ENCODE measurements at regions of chrX and their contacts with region 1.

Region 1: DNA sequence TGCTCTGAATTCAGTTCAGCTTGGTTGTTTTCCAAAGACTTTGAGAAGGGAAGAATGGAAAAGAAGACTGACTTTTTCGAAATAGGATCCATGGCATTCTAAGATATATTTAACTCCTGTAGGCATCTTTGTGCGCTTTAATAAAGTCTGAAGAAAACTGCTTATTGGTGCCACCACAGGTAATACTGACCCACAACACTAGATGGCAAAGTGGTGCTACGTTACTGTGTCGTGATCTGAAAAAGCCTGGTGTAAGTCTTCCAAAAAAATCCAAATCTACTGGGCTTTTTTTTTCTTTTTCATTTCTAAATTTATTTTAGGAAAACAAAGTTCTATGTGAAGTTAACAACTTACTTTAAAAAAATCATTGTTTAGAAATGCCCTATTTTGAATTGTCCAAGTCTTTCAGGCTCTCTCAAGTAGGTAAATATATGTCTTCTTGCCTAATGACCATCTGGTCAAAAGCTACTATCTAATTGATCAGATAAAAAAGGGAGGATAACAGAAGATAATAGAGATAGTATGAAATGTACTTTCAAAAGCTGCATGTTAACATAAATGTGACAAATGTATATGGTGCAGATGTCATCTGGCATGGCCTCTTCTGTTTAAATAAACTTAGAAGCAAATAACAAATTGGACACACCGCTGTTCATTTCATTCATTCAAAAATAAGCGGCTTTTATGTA is 47.0 kb upstream of the MID1IP1 start:
- DNase-seq: peak; percentile 16 to 17
- H3K4me3 ChIP-seq: no peak overlapping the region
- H3K27ac ChIP-seq: no peak overlapping the region
- H3K4me1 ChIP-seq: no peaks in the 10 kb centered on the region
- H3K27me3 ChIP-seq: no peaks in the 10 kb centered on the region
- CTCF ChIP-seq: peak in 5 of 6 experiments; percentile 37 to 67 (median 62)
- POLR2A ChIP-seq: no peak

Region 2: DNA sequence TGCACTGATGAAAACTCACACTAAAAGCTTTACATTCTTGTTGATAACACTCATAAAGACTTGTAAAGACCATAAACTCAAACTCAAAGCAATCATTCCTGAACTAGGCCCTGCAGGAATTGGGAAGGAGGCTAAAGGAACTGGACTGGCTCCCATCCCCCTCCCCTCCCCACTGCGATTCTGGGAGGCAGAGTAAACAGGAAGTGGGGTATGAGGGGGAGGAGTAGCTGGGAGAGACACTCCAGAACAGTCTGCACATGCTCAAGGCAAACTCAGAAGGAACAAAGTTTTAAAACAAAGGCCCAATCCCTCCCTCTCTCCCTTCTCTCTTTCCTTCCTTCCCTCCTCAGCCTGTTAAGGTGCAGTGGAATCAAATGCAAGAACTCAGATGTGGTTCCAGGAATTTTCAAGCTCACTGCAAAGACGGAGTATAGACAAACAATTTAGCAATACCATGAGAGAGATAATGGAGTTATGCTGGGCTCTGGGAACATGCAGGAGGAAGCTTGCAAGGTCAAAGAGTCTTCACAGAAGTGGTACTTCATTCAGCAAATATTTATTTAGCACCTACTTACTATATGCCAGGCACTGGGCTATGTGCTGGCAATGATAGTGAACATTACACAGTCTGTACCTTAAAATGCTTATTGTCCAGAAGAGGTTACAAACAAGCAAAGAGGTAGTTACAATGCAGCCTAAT is 62.9 kb after region 1 on chrX:
- intact Hi-C with region 1: no loop called
- DNase-seq: peak; percentile 50 to 57
- H3K4me3 ChIP-seq: no peak overlapping the region
- H3K27ac ChIP-seq: peak overlapping the region in 1 of 3 donors; percentile 15
- H3K4me1 ChIP-seq: peaks cover 0 to 7% of the 10 kb centered on the region in 2 donors
- H3K27me3 ChIP-seq: no peaks in the 10 kb centered on the region
- CTCF ChIP-seq: no peak
- POLR2A ChIP-seq: no peak

Region 3: DNA sequence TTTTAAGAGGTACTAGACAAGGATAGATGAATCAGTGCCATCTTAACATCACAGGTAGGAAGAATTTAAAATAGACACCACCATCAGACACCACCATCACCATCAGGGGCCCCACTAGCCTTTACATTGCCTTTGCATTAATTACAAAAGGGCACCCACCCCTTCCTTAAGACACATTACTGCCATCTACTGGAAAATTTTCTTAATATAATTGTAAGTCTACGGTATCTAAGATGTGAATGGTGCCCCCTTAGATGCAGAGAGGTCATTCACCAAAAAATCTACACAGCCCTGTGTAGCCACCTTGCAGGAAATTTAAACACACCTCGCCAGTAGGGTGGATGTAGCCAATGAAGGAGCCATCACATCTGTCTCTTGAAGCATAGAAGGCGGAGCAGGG is 231.1 kb after region 1 on chrX:
- intact Hi-C with region 1: loop called (anchors 10 kb)
- DNase-seq: no peak
- H3K4me3 ChIP-seq: no peak overlapping the region
- H3K27ac ChIP-seq: no peak overlapping the region
- H3K4me1 ChIP-seq: no peaks in the 10 kb centered on the region
- H3K27me3 ChIP-seq: no peaks in the 10 kb centered on the region
- CTCF ChIP-seq: peak in 2 of 6 experiments; percentile 17 to 23
- POLR2A ChIP-seq: no peak